Right cardiac atrium (tissue), 5 donors: ENCODE measurements at regions of chr1 and their contacts with region 1.

Region 1: DNA sequence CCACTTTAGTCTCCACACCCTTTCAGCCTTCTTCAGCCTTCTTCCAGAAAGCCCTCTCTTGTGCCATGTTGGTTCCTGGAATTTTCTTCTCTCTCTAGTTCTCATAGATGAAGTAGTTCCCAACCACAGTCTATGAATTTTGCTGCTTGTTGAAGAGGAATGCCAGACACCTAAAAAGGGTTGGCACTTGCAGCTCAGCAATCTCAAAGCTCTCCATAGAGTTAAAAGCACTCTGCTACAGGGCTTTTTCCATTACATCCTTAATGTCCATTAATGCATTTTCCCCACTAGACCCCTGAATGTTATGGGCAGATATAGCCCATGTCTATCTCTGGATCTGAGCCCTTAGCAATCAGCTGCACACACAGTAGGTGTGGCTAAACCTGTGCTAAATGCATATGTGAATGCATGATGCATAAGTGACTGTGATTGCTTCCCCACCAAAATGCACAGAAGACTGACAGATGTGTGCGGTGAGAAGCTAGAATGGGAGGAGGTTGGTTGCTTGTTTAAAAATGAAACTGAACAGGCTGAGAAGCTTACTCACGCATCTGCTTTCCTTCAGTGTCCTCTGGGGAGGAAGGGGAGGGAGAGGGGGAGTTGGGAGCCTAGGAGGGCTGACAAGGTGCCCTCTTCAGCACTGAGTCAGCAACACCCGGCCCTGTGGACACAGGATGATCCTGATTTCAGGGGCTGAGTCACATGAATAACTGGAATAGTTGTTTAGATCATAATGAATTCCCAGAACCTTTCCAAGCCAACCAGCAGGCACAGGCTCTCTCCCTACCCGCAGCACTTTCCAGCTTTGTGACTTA is 146.1 kb upstream of the FGGY start:
- DNase-seq: peak; percentile 84 to 86 (median 86)
- ATAC-seq: peak; percentile 94 to 96
- H3K4me3 ChIP-seq: peak overlapping the region; percentile 21
- H3K27ac ChIP-seq: peak overlapping the region; percentile 97
- H3K4me1 ChIP-seq: peaks cover 12% of the 10 kb centered on the region
- H3K27me3 ChIP-seq: no peaks in the 10 kb centered on the region

Region 2: DNA sequence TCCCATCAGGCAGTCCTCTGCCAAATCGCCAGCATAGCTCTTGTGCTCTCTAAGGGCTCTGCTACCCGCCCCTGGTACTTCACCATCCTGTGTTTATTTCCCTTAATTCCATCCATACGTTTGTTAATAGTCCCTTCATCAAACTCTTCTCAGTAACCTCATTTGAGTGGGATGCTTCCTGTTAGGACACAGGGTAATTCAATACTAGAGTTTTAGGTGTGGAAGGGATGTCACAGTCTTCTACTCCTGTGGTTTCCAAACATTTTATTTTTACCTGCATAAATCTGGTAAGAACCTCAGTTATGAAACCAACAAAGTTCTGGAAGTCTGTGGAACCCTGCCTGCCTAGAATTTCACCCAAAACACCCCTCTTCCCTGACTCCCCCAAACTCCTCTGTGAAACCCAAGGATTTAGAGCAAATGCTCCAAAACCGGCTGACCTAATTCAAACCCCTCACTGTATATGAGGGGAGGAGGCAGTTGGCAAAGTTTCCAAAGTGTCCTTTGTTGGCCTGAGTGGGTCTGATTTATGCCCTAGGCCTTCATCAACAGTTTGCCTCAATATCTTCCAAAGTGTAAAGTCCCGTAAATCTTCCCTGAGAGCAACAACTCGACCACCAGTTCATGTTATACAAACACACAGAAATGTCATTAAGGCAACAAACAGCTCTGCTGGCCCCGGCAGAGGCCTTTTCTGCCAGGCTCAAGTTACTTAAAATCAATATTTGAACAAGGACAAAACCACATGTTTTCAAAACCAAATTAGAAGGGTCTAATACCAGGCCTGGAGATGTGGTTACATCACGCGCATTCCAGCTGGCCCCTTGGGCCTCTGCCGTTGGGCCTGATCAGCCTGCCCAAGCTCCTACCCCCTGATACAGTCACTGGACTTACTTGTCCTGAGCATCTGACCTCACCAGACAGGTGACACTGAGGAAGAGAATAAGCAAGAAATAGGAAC is 63.7 kb after region 1 on chr1:
- intact Hi-C with region 1: no loop called
- DNase-seq: no peak
- ATAC-seq: no peak
- H3K4me3 ChIP-seq: no peak overlapping the region
- H3K27ac ChIP-seq: no peak overlapping the region
- H3K4me1 ChIP-seq: no peaks in the 10 kb centered on the region
- H3K27me3 ChIP-seq: no peaks in the 10 kb centered on the region

Region 3: DNA sequence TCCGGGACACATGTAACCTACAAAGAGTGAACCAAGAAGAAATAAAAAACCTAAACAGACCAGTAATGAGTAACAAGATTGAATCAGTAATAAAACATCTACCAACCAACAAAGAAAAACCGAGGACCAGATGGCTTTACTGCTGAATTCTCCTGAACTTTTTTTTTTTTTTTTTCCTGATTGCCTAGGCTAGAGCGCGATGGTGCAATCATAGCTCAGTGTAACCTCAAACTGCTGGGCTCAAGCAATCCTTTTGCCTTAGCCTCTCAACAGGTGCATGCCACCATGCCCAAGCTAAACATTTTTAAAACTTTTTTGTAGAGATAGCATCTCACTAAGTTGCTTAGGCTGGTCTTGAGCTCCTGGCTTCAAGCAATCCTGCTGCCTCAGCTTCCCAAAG is 134.9 kb after region 1 on chr1:
- intact Hi-C with region 1: loop called in 3 of 4 experiments (anchors 5 to 10 kb)
- DNase-seq: no peak
- ATAC-seq: no peak
- H3K4me3 ChIP-seq: no peak overlapping the region
- H3K27ac ChIP-seq: no peak overlapping the region
- H3K4me1 ChIP-seq: no peaks in the 10 kb centered on the region
- H3K27me3 ChIP-seq: no peaks in the 10 kb centered on the region